Pancreas (tissue), 10 donors: ENCODE measurements at regions of chr19 and their contacts with region 1.

Region 1: DNA sequence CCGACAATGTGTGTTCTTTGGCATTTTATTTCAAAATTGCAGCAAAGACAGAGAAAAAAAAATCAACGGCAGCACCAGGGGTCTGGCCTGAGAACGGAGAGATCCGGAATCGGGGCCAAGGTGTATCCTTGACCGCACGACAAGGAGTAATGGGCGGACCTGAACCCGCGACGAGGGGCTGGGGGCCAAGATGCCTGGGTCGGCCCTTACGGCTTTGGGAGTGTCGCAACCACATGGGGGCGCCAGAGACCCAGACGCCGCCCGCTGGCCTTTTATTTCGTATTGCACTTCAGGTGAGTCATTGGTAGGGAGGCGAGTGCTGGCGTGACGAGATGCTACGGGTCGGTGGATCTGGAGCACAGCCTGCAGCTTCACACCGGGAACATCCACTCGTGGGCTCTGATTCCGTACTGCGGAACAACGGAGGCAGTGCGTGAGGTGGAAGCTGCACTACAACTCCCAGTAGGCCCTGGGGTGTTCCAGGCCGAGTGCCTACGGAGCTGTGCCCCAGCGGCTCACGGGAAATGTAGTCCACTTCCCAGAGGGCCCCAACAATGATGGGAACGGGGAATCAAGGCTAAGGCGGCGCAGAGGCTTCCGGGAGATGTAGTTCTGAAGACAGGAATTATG is 15.7 kb downstream of the BCAT2 start:
- DNase-seq: peak; percentile 89 to 96 (median 90)
- ATAC-seq: peak; percentile 96 to 99 (median 99)
- H3K4me3 ChIP-seq: peak overlapping the region in 3 of 4 donors; percentile 5 to 51 (median 38)
- H3K27ac ChIP-seq: peak overlapping the region; percentile 9 to 68 (median 56)
- H3K4me1 ChIP-seq: no peaks in the 10 kb centered on the region
- H3K27me3 ChIP-seq: no peaks in the 10 kb centered on the region
- CTCF ChIP-seq: peak; percentile 91 to 95 (median 92)

Region 2: GRCh38 chr19:48835734-48836088 is 40.5 kb after region 1 on chr19:
- intact Hi-C with region 1: loop called (anchors 2 to 10 kb)
- DNase-seq: peak; percentile 87 to 99 (median 94)
- ATAC-seq: peak; percentile 97 to 98 (median 98)
- H3K4me3 ChIP-seq: peak overlapping the region in 2 of 4 donors; percentile 20 to 30
- H3K27ac ChIP-seq: peak overlapping the region in 1 of 4 donors; percentile 48
- H3K4me1 ChIP-seq: no peaks in the 10 kb centered on the region
- H3K27me3 ChIP-seq: no peaks in the 10 kb centered on the region
- CTCF ChIP-seq: peak; percentile 79 to 81 (median 80)

Region 3: GRCh38 chr19:48842789-48843162 is 47.6 kb after region 1 on chr19:
- intact Hi-C with region 1: loop called (anchors 2 to 10 kb)
- DNase-seq: peak in 2 of 6 donors; percentile 17 to 53
- ATAC-seq: peak; percentile 59 to 81 (median 74)
- H3K4me3 ChIP-seq: no peak overlapping the region
- H3K27ac ChIP-seq: no peak overlapping the region
- H3K4me1 ChIP-seq: no peaks in the 10 kb centered on the region
- H3K27me3 ChIP-seq: no peaks in the 10 kb centered on the region
- CTCF ChIP-seq: peak; percentile 43 to 76 (median 69)

Region 4: GRCh38 chr19:48965040-48965805 is 170.1 kb after region 1 on chr19 and contains the start of gene FTL:
- intact Hi-C with region 1: loop called in 2 of 3 experiments (anchors 5 to 10 kb)
- DNase-seq: peak; percentile 94 to 99 (median 96)
- ATAC-seq: peak; percentile 86 to 89 (median 88)
- H3K4me3 ChIP-seq: peak within 1 kb of the TSS; percentile 42 to 84 (median 64)
- H3K27ac ChIP-seq: peak within 1 kb of the TSS; percentile 77 to 93 (median 88)
- H3K4me1 ChIP-seq: peaks cover 14 to 17% (median 15%) of the 10 kb centered on the region in 3 donors
- H3K27me3 ChIP-seq: no peaks in the 10 kb centered on the region
- CTCF ChIP-seq: no peak
- total RNA-seq, gene FTL: 394 to 1,427 (median 690) TPM